Activated CD4-positive, alpha-beta T cell treated with anti-CD3 and anti-CD28 coated beads, Interleukin-2, amount 10 ng/mL, durations not matched to agents 24 days and 14 days (primary cell): ENCODE measurements at regions of chr5 and their contacts with region 1.

Region 1: DNA sequence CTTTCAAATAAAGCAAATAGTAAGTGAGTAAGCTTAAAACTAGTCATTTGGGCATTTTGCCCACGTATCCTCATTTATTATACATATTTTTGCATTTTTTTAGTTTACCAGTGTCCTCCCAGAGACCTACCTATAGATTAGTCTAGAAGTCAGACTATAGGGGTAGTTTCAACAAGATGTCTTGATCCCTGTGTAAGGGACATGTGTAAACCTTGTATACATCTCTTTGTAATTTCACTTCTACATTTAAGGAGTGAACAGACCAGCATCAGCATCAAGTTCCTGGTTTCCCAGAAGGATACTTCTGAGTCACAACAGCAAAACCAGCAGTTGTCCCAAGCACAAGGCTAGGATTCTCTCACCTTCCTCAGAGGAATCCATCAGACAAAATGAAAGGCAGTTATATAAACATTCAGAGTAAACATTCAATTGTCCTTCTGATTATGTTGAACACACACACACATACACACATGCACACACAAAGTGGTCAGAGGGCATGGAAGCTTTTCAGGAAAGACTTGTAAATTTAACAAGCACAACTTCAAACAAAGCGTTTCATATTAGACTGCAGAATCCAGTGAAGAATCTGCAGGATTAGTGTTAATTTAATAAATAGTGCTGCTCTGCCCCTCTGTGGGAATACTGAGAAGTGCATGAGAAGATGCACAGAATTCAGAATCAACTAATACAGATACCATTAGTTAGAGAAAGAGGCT is 55.4 kb downstream of the HINT1 start:
- DNase-seq: peak; percentile 82
- H3K4me3 Mint-ChIP-seq: no peak overlapping the region
- H3K27ac Mint-ChIP-seq: no peak overlapping the region
- H3K4me1 Mint-ChIP-seq: peaks cover 9% of the 10 kb centered on the region
- H3K27me3 Mint-ChIP-seq: no peaks in the 10 kb centered on the region

Region 2: DNA sequence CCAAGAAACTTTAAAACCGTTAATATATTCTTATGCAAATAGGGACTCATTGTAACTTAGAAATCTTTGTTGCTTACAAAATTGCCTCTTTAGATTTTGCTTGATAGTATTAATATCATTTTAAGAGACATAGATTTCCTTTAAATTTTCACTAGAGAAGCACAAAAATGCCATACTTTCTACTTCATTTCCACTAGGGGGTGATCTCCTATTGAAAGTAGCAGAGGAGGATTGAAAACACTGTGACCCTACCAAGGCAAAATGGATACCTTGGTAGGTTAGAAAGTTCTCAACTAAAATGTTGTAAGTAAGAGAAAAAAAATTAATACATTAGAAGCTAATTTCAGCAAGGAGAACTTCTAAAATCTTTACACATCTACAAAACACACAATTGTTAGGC is 1000.5 kb before region 1 on chr5:
- intact Hi-C with region 1: loop called (anchors 5 kb)
- DNase-seq: no peak
- H3K4me3 Mint-ChIP-seq: no peak overlapping the region
- H3K27ac Mint-ChIP-seq: no peak overlapping the region
- H3K4me1 Mint-ChIP-seq: no peaks in the 10 kb centered on the region
- H3K27me3 Mint-ChIP-seq: peaks cover 4% of the 10 kb centered on the region

Region 3: GRCh38 chr5:130627157-130627556 is 482.5 kb before region 1 on chr5:
- intact Hi-C with region 1: no loop called
- DNase-seq: no peak
- H3K4me3 Mint-ChIP-seq: no peak overlapping the region
- H3K27ac Mint-ChIP-seq: no peak overlapping the region
- H3K4me1 Mint-ChIP-seq: no peaks in the 10 kb centered on the region
- H3K27me3 Mint-ChIP-seq: no peaks in the 10 kb centered on the region

Region 4: GRCh38 chr5:130871346-130872086 is 238.2 kb before region 1 on chr5:
- intact Hi-C with region 1: loop called (anchors 1 kb)
- DNase-seq: peak; percentile 84
- H3K4me3 Mint-ChIP-seq: no peak overlapping the region
- H3K27ac Mint-ChIP-seq: no peak overlapping the region
- H3K4me1 Mint-ChIP-seq: no peaks in the 10 kb centered on the region
- H3K27me3 Mint-ChIP-seq: no peaks in the 10 kb centered on the region

Region 5: DNA sequence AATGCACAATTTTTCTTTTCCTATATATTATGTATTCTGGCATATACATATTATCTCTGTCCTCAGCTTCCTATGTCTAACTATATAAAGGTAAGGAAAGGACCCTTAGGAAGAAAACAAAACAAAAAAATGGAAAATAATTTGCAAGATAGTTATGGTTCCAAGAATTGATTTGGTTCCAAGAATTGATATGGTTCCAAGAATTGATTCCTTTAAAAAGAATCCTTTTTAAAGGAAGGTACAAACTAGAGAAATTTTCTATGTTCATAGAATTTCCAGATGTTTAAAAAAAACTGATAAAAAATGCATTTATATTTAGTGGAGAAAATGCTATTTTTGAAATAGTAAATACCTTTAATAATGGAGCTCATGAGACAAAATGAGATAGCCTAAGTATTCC is 73.1 kb after region 1 on chr5:
- intact Hi-C with region 1: no loop called
- DNase-seq: no peak
- H3K4me3 Mint-ChIP-seq: no peak overlapping the region
- H3K27ac Mint-ChIP-seq: no peak overlapping the region
- H3K4me1 Mint-ChIP-seq: peaks cover 12% of the 10 kb centered on the region
- H3K27me3 Mint-ChIP-seq: no peaks in the 10 kb centered on the region

Region 6: GRCh38 chr5:131209506-131210150 is 99.9 kb after region 1 on chr5:
- intact Hi-C with region 1: no loop called
- DNase-seq: peak; percentile 87
- H3K4me3 Mint-ChIP-seq: peak overlapping the region; percentile 82
- H3K27ac Mint-ChIP-seq: peak overlapping the region; percentile 94
- H3K4me1 Mint-ChIP-seq: peaks cover 47% of the 10 kb centered on the region
- H3K27me3 Mint-ChIP-seq: no peaks in the 10 kb centered on the region